Panc1 (cell line): ENCODE measurements at regions of chr15 and their contacts with region 1.

Region 1: GRCh38 chr15:88938802-88939485 is 25.8 kb upstream of the MFGE8 start:
- DNase-seq: no peak
- ATAC-seq: no peak
- H3K4me3 ChIP-seq: no peak overlapping the region
- H3K27ac ChIP-seq: peak overlapping the region; percentile 58; the same call in 1 of the 2 replicates
- H3K4me1 ChIP-seq: 0 out of 2 replicates have a peak, but pooled peaks cover 3% of the 10 kb centered on the region
- H3K27me3 ChIP-seq: no peaks in the 10 kb centered on the region
- CTCF ChIP-seq: no peak

Region 2: DNA sequence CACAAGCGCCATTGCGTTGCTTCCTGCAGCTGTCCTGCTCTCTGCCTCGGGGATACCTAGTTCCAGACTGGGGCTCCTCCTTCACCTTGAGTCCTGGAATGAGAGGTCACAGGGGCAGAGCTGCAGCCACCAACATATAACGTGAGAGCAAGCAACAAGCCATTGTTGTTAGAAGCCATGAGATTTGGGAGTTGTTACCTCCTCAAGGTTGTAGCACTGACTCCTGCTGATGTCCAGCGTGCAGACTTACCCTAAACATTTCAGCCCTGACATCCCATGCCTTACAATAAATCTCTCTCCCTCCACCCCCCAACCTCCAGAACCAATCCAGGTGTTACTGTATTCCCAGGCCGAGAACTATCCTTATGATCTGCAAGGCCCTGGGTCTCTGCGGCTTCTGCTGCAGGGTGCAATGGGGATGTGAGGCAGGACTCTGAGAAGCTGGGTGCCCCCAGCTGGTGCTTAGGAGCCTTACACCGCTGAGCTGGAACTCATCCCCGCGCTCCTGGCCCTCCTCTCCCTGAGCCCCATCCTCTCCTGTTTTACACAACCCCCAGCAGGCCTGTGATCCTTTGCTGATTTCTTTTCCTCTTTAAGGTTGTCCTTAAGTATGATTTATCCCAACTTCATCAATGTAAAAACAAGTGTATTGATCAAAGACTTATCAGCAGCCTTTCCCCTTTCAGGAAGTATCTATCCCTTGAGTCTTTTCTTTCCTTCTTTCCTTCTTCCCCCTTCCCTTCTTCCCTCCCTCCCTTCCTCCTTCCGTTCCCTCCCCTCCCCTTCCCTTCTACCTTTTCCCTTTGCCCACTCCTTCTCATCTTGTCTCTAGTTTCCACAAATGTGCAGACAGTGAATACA is 65.2 kb after region 1 on chr15:
- CTCF ChIA-PET with region 1: interaction called, 11 read pairs
- POLR2A ChIA-PET with region 1: no interaction called
- in situ Hi-C with region 1: no loop called
- intact Hi-C with region 1: no loop called
- DNase-seq: no peak
- ATAC-seq: peak; percentile 93
- H3K4me3 ChIP-seq: no peak overlapping the region
- H3K27ac ChIP-seq: peak overlapping the region; percentile 71
- H3K4me1 ChIP-seq: peaks cover 36% of the 10 kb centered on the region
- H3K27me3 ChIP-seq: no peaks in the 10 kb centered on the region
- CTCF ChIP-seq: peak; percentile 85